Pancreas (tissue), 10 donors: ENCODE measurements at regions of chr15 and their contacts with region 1.

Region 1: GRCh38 chr15:51380999-51381795 is 39.7 kb downstream of the GLDN start:
- DNase-seq: peak in 3 of 6 donors; percentile 40 to 59 (median 40)
- ATAC-seq: peak; percentile 92 to 96 (median 94)
- H3K4me3 ChIP-seq: no peak overlapping the region
- H3K27ac ChIP-seq: no peak overlapping the region
- H3K4me1 ChIP-seq: no peaks in the 10 kb centered on the region
- H3K27me3 ChIP-seq: no peaks in the 10 kb centered on the region
- CTCF ChIP-seq: peak; percentile 48 to 72 (median 58)

Region 2: DNA sequence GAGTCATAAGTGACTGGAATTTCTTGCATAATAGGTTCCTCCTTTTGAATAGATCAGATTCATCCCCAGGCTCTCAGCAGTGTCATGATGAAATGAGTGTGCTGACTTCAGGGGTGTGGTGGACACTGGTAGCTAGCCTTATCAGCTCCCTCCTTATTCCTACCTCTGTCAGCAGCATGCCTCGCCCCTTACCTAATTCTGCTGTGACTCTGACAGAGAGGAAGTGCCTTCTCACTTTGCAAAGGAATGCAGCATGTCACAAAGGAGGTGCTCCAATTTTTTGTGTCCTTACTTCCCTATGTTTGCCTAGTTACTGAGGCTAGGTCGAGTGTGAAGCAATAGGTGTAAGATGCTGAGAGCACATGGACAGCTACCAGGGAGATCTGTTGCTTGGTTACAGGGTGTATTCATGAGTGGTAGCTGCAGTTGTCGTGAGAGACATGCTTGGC is 377.1 kb before region 1 on chr15:
- intact Hi-C with region 1: no loop called
- DNase-seq: no peak
- ATAC-seq: peak in 1 of 4 donors; percentile 49
- H3K4me3 ChIP-seq: no peak overlapping the region
- H3K27ac ChIP-seq: no peak overlapping the region
- H3K4me1 ChIP-seq: no peaks in the 10 kb centered on the region
- H3K27me3 ChIP-seq: no peaks in the 10 kb centered on the region
- CTCF ChIP-seq: no peak

Region 3: GRCh38 chr15:51162865-51163762 is 218.1 kb before region 1 on chr15:
- intact Hi-C with region 1: loop called in 2 of 3 experiments (anchors 10 kb)
- DNase-seq: peak in 5 of 6 donors; percentile 30 to 75 (median 54)
- ATAC-seq: peak; percentile 84 to 98 (median 94)
- H3K4me3 ChIP-seq: no peak overlapping the region
- H3K27ac ChIP-seq: no peak overlapping the region
- H3K4me1 ChIP-seq: no peaks in the 10 kb centered on the region
- H3K27me3 ChIP-seq: no peaks in the 10 kb centered on the region
- CTCF ChIP-seq: peak; percentile 82 to 98 (median 89)

Region 4: DNA sequence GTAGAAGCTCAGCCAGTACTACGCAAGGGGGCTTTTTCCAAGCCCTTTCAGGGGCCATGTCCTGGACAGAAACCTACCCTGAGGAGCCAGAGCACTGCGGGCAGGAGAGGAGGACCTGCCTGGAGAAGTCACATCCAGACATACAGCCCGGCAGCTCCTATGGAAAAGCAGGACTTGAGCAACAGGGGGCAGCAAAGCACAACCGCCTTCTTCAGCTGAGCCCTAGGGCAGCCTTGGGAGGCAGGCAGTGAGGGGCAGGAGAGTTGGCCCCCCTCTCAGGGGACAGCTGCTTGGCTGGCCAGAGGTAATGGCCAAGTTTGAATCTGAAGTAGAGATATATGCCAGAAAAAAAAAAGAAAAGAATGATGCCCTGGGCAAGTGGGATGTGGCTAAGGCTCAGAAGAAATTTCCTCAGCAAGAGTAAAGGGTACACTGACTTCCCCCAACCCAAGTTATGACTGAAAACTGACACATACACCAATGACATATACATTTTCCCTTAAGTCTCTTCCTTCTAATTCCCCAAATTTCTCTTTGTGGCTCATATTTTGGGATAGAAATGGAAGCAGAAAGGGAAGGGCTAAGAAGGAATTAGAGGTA is 99.7 kb before region 1 on chr15:
- intact Hi-C with region 1: loop called in 2 of 3 experiments (anchors 5 to 10 kb)
- DNase-seq: peak; percentile 38 to 74 (median 62)
- ATAC-seq: peak; percentile 80 to 97 (median 94)
- H3K4me3 ChIP-seq: no peak overlapping the region
- H3K27ac ChIP-seq: no peak overlapping the region
- H3K4me1 ChIP-seq: no peaks in the 10 kb centered on the region
- H3K27me3 ChIP-seq: peaks cover 0 to 9% (median 0%) of the 10 kb centered on the region in 4 donors
- CTCF ChIP-seq: peak in 3 of 4 donors; percentile 37 to 53 (median 44)